T-cell (primary cell): ENCODE measurements at regions of chr12 and their contacts with region 1.

Region 1: GRCh38 chr12:7959701-7960121 is 23.7 kb upstream of the SLC2A3 start:
- DNase-seq: peak in 31 of 35 experiments; percentile 8 to 74 (median 36)
- ATAC-seq: peak; percentile 42 to 57 (median 55)
- H3K4me3 ChIP-seq: peak overlapping the region; percentile 53 to 90
- H3K4me3 Mint-ChIP-seq: peak overlapping the region; percentile 81 to 87 (median 84)
- H3K27ac ChIP-seq: peak overlapping the region; percentile 87
- H3K27ac Mint-ChIP-seq: peak overlapping the region; percentile 92 to 93
- H3K4me1 ChIP-seq: peaks cover 28 to 34% of the 10 kb centered on the region in 2 experiments
- H3K4me1 Mint-ChIP-seq: peaks cover 38 to 52% (median 42%) of the 10 kb centered on the region in 3 donors
- H3K27me3 ChIP-seq: no peaks in the 10 kb centered on the region
- H3K27me3 Mint-ChIP-seq: no peaks in the 10 kb centered on the region

Region 2: GRCh38 chr12:7948589-7949260 is 11.0 kb before region 1 on chr12:
- CTCF ChIA-PET with region 1: interaction called, 4 to 11 read pairs
- POLR2A ChIA-PET with region 1: interaction called in 1 of 2 experiments, 6 read pairs
- DNase-seq: no peak
- ATAC-seq: no peak
- H3K4me3 ChIP-seq: no peak overlapping the region
- H3K4me3 Mint-ChIP-seq: no peak overlapping the region
- H3K27ac ChIP-seq: no peak overlapping the region
- H3K27ac Mint-ChIP-seq: no peak overlapping the region
- H3K4me1 ChIP-seq: peaks cover 0 to 5% of the 10 kb centered on the region in 2 experiments
- H3K4me1 Mint-ChIP-seq: peaks cover 0 to 6% (median 4%) of the 10 kb centered on the region in 3 donors
- H3K27me3 ChIP-seq: no peaks in the 10 kb centered on the region
- H3K27me3 Mint-ChIP-seq: no peaks in the 10 kb centered on the region

Region 3: DNA sequence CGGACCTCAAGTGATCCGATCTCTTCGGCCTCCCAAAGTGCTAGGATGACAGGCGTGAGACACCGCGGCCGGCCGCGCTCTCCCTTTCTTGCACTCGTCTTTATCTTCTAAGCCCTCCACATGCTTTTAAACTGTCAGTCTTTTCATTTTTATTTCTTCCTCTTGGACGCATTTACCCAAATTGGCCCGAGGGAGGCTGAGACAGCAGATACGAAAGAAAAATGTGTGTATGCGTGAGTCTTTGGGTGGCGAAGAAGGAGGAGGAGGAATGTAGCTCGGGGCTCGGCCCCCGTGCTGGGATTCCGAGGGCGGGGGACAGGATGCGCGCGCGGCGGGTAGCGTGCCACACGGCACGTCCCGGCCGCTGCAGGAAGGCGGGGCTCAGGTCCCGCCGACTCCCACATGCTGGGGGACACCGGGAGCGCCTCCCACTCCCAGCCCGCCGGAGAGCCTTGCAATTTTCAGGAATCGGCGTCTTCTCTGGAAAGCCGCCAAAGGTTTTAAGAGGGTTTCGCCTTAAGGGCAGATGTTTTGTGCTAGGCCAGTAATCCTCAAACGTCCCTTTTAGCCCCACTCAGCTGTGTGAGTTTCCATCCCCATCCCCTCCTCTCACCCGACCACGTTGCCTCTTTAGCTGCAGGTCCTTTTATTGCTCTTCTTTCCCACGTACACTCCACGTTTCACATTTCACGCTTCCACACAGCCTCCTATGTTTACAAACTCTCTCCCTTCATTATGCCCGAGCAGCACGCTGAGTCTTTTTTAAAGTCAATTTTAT is 11.0 kb after region 1 on chr12:
- CTCF ChIA-PET with region 1: interaction called, 9 to 23 read pairs
- POLR2A ChIA-PET with region 1: interaction called, 4 to 31 read pairs
- DNase-seq: peak; percentile 68 to 95 (median 82)
- ATAC-seq: peak; percentile 86 to 98 (median 97)
- H3K4me3 ChIP-seq: peak overlapping the region; percentile 61 to 70
- H3K4me3 Mint-ChIP-seq: peak overlapping the region; percentile 81 to 89 (median 86)
- H3K27ac ChIP-seq: peak overlapping the region; percentile 95
- H3K27ac Mint-ChIP-seq: peak overlapping the region; percentile 94 to 96
- H3K4me1 ChIP-seq: peaks cover 2 to 31% of the 10 kb centered on the region in 2 experiments
- H3K4me1 Mint-ChIP-seq: peaks cover 24 to 33% (median 31%) of the 10 kb centered on the region in 3 donors
- H3K27me3 ChIP-seq: peaks cover 0 to 2% of the 10 kb centered on the region in 2 experiments
- H3K27me3 Mint-ChIP-seq: no peaks in the 10 kb centered on the region

Region 4: DNA sequence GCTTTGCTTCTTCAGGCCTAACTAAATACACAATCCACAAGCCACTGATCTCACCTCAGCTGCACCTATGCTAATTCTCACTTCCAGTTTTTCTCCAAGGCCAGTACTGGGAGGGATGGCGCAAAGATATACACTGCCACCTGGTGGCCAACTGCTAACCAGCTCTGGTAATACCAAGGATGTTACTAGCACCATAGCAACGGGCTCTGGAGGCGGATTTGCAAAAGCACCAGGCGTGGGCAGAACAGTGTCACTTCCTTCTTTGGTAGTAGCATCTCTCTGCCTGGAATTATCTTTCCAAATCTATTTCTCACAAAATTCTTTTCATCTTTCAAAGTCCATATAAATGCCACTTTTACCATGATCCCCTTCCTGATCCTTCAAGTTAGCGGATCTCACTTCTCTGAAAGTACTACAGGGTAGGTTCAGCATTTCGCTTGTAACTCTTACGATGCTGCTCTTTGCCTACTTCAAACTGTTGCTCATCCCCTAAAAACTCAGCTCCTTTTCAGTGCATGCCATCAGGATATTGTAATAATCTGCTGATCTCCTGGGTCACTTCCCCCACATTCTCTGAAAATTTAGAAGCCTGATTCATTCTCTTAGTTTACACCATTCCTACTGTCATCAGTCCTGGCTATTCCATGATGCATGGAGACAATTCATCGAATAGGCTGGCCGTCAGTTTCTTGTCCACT is 35.7 kb after region 1 on chr12:
- CTCF ChIA-PET with region 1: interaction called, 9 to 19 read pairs
- POLR2A ChIA-PET with region 1: interaction called in 1 of 2 experiments, 9 read pairs
- DNase-seq: peak; percentile 47 to 87 (median 79)
- ATAC-seq: peak; percentile 99 to 100 (median 99)
- H3K4me3 ChIP-seq: no peak overlapping the region
- H3K4me3 Mint-ChIP-seq: no peak overlapping the region
- H3K27ac ChIP-seq: peak overlapping the region; percentile 36
- H3K27ac Mint-ChIP-seq: no peak overlapping the region
- H3K4me1 ChIP-seq: peaks cover 3 to 17% of the 10 kb centered on the region in 2 experiments
- H3K4me1 Mint-ChIP-seq: peaks cover 13 to 19% (median 14%) of the 10 kb centered on the region in 3 donors
- H3K27me3 ChIP-seq: peaks cover 0 to 2% of the 10 kb centered on the region in 2 experiments
- H3K27me3 Mint-ChIP-seq: no peaks in the 10 kb centered on the region

Region 5: GRCh38 chr12:8038659-8039114 is 79.0 kb after region 1 on chr12:
- CTCF ChIA-PET with region 1: interaction called in 1 of 2 experiments, 3 read pairs
- POLR2A ChIA-PET with region 1: interaction called in 1 of 2 experiments, 10 read pairs
- DNase-seq: peak in 9 of 35 experiments; percentile 12 to 44 (median 25)
- ATAC-seq: peak; percentile 48 to 66 (median 58)
- H3K4me3 ChIP-seq: peak overlapping the region; percentile 27 to 39
- H3K4me3 Mint-ChIP-seq: peak overlapping the region; percentile 53 to 88 (median 67)
- H3K27ac ChIP-seq: peak overlapping the region; percentile 10
- H3K27ac Mint-ChIP-seq: peak overlapping the region; percentile 68 to 81
- H3K4me1 ChIP-seq: peaks cover 31 to 52% of the 10 kb centered on the region in 2 experiments
- H3K4me1 Mint-ChIP-seq: peaks cover 62 to 67% (median 62%) of the 10 kb centered on the region in 3 donors
- H3K27me3 ChIP-seq: no peaks in the 10 kb centered on the region
- H3K27me3 Mint-ChIP-seq: no peaks in the 10 kb centered on the region